H1 (cell line): ENCODE measurements at regions of chr11 and their contacts with region 1.

Region 1: GRCh38 chr11:85664615-85665481 is at the start of gene CREBZF:
- DNase-seq: peak; percentile 69 to 95
- H3K4me3 ChIP-seq: peak within 1 kb of the TSS; percentile 81 to 98 (median 92)
- H3K27ac ChIP-seq: peak within 1 kb of the TSS; percentile 90
- H3K4me1 ChIP-seq: peaks cover 0 to 3% (median 0%) of the 10 kb centered on the region in 4 experiments; a peak in 3 of 7 replicates
- H3K27me3 ChIP-seq: no peaks in the 10 kb centered on the region
- CTCF ChIP-seq: no peak
- EP300 ChIP-seq: no peak
- POLR2A ChIP-seq: peak; percentile 82 to 97
- RAD21 ChIP-seq: no peak
- total RNA-seq, gene CREBZF: 44.2 and 44.9 TPM in 2 replicates

Region 2: GRCh38 chr11:85627998-85628770 is 36.7 kb before region 1 on chr11 and contains the start of gene TMEM126B:
- CTCF ChIA-PET with region 1: no interaction called
- POLR2A ChIA-PET with region 1: interaction called, 10 read pairs
- DNase-seq: peak; percentile 88 to 94
- H3K4me3 ChIP-seq: peak within 1 kb of the TSS; percentile 78 to 95 (median 92)
- H3K27ac ChIP-seq: peak within 1 kb of the TSS; percentile 68
- H3K4me1 ChIP-seq: peaks cover 0 to 9% (median 0%) of the 10 kb centered on the region in 4 experiments; a peak in 4 of 7 replicates
- H3K27me3 ChIP-seq: no peaks in the 10 kb centered on the region
- CTCF ChIP-seq: no peak
- EP300 ChIP-seq: no peak
- POLR2A ChIP-seq: peak; percentile 74 to 93
- RAD21 ChIP-seq: no peak
- total RNA-seq, gene TMEM126B: 82.8 and 85.6 TPM in 2 replicates

Region 3: DNA sequence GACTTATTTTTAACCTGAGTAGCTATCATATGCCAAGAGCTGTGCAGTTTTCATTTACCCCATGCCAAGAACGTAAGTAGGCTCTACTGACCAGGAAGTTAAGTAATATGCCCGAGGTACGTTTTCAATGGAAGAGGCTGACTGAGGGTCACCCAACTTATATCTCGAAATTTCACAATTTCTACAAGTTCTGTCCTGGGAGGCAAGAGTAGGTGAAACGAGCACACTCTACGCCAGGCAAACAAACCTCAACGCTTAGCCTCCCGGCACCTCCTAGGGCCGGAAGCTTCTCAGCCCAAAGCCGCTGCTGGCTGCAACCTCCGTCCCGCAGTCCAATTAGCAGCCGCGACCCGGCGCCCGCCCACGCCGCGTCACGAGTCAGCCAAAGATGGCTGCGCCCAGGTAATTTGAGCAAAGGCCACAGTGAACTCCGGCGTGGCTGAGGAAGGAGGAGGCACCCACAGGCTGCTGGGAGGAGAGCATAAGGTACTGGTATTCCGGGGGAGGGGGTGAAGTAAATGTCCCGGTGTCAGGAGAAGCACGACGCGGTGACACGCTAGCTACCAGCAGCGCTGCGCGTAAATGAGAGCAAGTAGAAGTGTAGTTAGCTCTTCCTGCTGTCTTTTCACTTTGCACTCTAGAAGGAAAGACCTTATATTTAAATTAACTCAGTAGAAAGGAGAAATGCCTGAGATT is 17.1 kb before region 1 on chr11 and contains the start of gene TMEM126A:
- CTCF ChIA-PET with region 1: interaction called, 4 read pairs
- POLR2A ChIA-PET with region 1: interaction called, 105 read pairs
- DNase-seq: peak; percentile 75 to 94
- H3K4me3 ChIP-seq: peak within 1 kb of the TSS; percentile 58 to 88 (median 70)
- H3K27ac ChIP-seq: peak within 1 kb of the TSS; percentile 66; the same call in 1 of the 2 replicates
- H3K4me1 ChIP-seq: peaks cover 0 to 8% (median 0%) of the 10 kb centered on the region in 4 experiments; a peak in 4 of 7 replicates
- H3K27me3 ChIP-seq: no peaks in the 10 kb centered on the region
- CTCF ChIP-seq: no peak
- EP300 ChIP-seq: peak in 1 of 2 experiments; percentile 31; a peak in 1 of 3 replicates
- POLR2A ChIP-seq: peak; percentile 65 to 94
- RAD21 ChIP-seq: peak; percentile 1 to 7; a peak in 1 of 4 replicates
- total RNA-seq, gene TMEM126A: 33.7 and 36.2 TPM in 2 replicates

Region 4: DNA sequence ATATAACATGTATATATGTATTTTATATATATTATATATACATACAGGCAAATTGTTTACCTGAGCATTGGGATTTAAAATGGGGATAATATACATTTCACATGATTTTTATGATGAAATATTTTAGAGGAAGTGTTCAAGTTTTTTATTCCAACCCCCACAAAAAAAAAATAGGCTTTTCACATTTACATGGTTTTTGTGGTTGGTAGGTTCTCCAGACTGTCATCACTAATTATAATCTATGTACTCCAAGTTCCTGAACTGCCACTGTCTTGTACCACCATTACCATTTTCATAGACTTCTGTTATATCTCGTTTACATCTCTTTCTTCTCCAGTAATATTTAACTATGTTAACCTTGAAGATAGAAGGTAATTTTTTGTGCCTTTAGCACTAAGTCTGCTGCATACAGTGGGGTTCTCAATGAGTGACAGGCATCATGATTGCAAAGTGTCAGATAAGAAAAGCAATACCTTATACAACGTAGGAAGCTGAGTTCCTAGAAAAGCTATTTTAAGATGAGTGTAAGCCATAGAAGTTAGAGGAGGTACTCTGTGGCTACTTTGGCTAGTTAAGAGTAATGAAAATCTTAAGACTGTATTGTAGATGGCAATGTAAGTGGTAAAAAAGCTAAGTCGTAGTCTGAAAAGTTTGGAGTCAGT is 11.9 kb before region 1 on chr11:
- CTCF ChIA-PET with region 1: interaction called, 4 read pairs
- POLR2A ChIA-PET with region 1: interaction called, 105 read pairs
- DNase-seq: no peak
- H3K4me3 ChIP-seq: no peak overlapping the region
- H3K27ac ChIP-seq: no peak overlapping the region
- H3K4me1 ChIP-seq: no peaks in the 10 kb centered on the region; a peak in 2 of 7 replicates
- H3K27me3 ChIP-seq: peaks cover 0 to 1% (median 0%) of the 10 kb centered on the region in 4 experiments; a peak in 1 of 7 replicates
- CTCF ChIP-seq: no peak
- EP300 ChIP-seq: no peak
- POLR2A ChIP-seq: no peak; a peak in 1 of 3 replicates
- RAD21 ChIP-seq: no peak

Region 5: GRCh38 chr11:85699957-85700741 is 35.3 kb after region 1 on chr11:
- CTCF ChIA-PET with region 1: no interaction called
- POLR2A ChIA-PET with region 1: no interaction called
- DNase-seq: no peak
- H3K4me3 ChIP-seq: no peak overlapping the region
- H3K27ac ChIP-seq: no peak overlapping the region
- H3K4me1 ChIP-seq: no peaks in the 10 kb centered on the region
- H3K27me3 ChIP-seq: no peaks in the 10 kb centered on the region
- CTCF ChIP-seq: no peak
- EP300 ChIP-seq: no peak
- POLR2A ChIP-seq: no peak
- RAD21 ChIP-seq: no peak